GM23248 (cell line): ENCODE measurements at regions of chr18 and their contacts with region 1.

Region 1: GRCh38 chr18:47748847-47749599 is 181.4 kb downstream of the SMAD2 start:
- DNase-seq: peak; percentile 75
- H3K4me3 ChIP-seq: peak overlapping the region; percentile 67
- H3K27ac ChIP-seq: no peak overlapping the region
- H3K4me1 ChIP-seq: no peaks in the 10 kb centered on the region
- H3K27me3 ChIP-seq: no peaks in the 10 kb centered on the region; the same call in 1 of the 2 replicates

Region 2: DNA sequence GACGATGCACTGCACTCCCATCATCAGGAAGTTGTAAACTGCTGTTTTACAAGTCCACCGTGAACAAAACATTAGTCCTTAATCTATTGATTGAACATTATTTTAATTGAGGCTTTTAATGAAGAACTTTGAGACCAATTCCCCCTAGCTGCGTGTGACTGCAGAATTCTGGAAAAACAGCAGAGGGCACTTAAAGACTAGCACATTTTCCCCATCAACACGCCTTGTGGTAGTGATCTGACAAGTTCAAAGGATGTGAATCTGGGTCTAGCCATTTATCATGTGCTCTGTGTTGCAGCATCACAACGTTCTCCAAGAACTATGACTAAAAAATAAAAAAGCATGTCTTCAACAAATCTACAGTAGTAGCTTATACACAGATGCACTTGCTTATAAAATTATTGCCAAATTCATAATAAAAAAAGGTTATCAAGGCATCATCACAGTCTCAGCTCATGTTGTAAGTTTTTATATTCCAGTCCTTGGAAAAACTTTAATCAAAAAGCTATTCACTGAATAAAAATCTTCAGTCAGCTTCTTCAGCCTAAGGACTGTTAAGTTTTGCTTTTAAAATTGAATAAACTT is 533.4 kb before region 1 on chr18:
- in situ Hi-C with region 1: loop called (anchors 10 kb)
- DNase-seq: peak; percentile 72
- H3K4me3 ChIP-seq: no peak overlapping the region
- H3K27ac ChIP-seq: no peak overlapping the region
- H3K4me1 ChIP-seq: no peaks in the 10 kb centered on the region
- H3K27me3 ChIP-seq: peaks cover 56% of the 10 kb centered on the region